ENCODE measurements at regions of chr5 and their contacts with region 1.

Region 1: GRCh38 chr5:43040287-43041098 is at the start of gene ANXA2R:
- DNase-seq: peak in 9 of 10 donors; percentile 64 to 85 (median 77)
- H3K4me3 ChIP-seq: peak within 1 kb of the TSS; percentile 7 to 83 (median 65)
- H3K27ac ChIP-seq: peak within 1 kb of the TSS; percentile 58 to 98 (median 96)
- H3K27me3 ChIP-seq: peaks cover 0 to 83% (median 64%) of the 10 kb centered on the region in 45 donors
- CTCF ChIP-seq: peak; percentile 41 to 87 (median 72)
- total RNA-seq, gene ANXA2R: 0.48 to 5.2 (median 1.9) TPM

Region 2: DNA sequence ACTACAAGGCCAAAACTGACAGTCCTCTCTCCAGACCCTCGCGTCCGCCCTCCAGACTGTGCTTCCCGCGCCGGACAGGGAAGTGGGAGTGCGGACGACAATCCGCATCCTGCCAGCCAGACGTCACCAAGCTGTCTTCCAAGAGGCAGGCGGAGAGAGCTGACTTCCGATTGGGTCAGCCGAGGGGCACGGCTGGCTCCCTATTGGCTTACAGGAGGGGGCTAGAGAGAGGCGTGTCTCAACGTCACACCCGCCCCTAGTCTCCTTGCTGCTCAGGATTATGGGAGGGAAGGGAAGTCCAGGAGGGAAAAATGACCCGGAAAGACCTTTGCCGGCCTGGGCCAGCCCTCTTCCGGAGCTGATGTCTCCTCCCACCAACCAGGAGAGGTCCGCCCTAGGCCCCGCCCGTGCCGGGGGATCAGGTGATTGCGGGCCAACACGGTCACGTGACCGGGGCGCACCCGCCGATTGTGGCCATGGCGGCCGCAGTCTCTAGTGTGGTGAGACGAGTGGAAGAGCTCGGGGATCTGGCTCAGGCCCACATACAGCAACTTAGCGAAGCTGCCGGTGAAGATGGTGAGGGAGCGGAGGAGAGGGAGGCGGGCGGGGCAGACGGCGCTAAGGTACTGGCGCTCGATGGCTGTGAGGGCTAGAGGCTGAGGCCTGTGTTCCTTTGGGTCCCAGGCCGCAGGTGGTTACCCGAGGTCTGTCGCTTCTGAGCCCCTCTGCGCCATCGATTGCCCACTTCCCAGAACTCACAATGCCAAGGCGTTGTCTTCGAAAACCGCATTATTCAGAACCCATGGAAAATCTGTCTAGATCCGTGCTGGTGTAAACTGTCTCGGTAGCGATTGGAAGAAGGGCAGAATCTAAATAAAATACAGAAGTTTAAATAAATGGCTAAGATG is 1136.3 kb before region 1 on chr5 and contains the start of gene RIMOC1:
- intact Hi-C with region 1: loop called in 1 of 2 experiments (anchors 10 kb)
- DNase-seq: peak; percentile 98 to 100 (median 99)
- H3K4me3 ChIP-seq: peak within 1 kb of the TSS; percentile 64 to 99 (median 90)
- H3K27ac ChIP-seq: peak within 1 kb of the TSS; percentile 59 to 95 (median 91)
- H3K27me3 ChIP-seq: peaks cover 0 to 4% (median 0%) of the 10 kb centered on the region in 45 donors
- CTCF ChIP-seq: peak in 23 of 56 donors; percentile 5 to 64 (median 24)
- total RNA-seq, gene RIMOC1: 23.2 to 54.9 (median 37.9) TPM

Region 3: DNA sequence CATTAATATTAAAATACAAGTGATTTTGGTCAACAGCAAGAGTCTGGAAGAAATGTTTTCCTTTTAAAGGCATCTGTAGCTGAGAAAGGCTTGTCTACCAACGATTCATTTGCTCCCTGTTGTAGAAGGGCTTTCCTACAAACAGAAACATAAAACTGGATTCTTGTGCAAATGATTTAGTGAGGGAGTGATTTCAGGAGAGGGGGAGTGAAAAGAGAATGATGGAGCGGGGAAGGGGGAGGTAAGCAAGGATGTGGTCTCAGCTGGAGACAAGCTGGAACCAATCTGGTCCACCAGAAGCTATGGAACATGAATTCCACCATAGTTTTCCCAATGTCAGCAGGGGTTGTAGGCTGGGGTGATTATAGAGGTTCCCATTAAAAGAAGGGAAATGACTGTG is 919.1 kb before region 1 on chr5:
- intact Hi-C with region 1: no loop called
- DNase-seq: no peak
- H3K4me3 ChIP-seq: no peak overlapping the region
- H3K27ac ChIP-seq: no peak overlapping the region
- H3K27me3 ChIP-seq: no peaks in the 10 kb centered on the region
- CTCF ChIP-seq: no peak

Region 4: DNA sequence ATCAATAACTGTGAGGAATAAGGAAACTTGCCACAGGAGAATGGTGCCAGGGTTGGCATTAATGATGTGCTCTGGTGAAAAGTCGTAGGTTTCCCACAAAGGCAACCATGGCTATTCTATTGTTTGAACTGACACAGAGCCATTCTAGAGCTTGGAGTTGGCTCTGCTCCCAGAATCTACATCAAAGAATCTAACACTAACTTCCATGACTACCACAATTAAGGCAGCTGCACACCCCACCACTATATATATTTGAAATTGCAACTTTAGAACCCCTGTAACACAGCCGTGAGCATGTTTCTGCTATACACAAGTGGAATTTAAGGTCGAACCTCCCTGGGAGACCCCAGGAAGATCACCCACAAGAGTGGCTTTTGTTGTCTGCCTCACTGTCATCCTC is 373.6 kb before region 1 on chr5:
- intact Hi-C with region 1: no loop called
- DNase-seq: no peak
- H3K4me3 ChIP-seq: no peak overlapping the region
- H3K27ac ChIP-seq: no peak overlapping the region
- H3K27me3 ChIP-seq: no peaks in the 10 kb centered on the region
- CTCF ChIP-seq: no peak

Region 5: GRCh38 chr5:42994246-42995151 is 46.0 kb before region 1 on chr5:
- intact Hi-C with region 1: loop called (anchors 1 to 2 kb)
- DNase-seq: peak in 9 of 10 donors; percentile 19 to 80 (median 74)
- H3K4me3 ChIP-seq: peak overlapping the region; percentile 0 to 70 (median 52)
- H3K27ac ChIP-seq: peak overlapping the region in 58 of 59 donors; percentile 3 to 94 (median 83)
- H3K27me3 ChIP-seq: peaks cover 15 to 100% (median 91%) of the 10 kb centered on the region in 45 donors
- CTCF ChIP-seq: peak; percentile 44 to 91 (median 75)

Region 6: GRCh38 chr5:43066799-43067741 is 26.6 kb after region 1 on chr5:
- intact Hi-C with region 1: loop called (anchors 1 kb)
- DNase-seq: peak; percentile 73 to 94 (median 86)
- H3K4me3 ChIP-seq: peak overlapping the region; percentile 54 to 96 (median 85)
- H3K27ac ChIP-seq: peak overlapping the region; percentile 96 to 100 (median 100)
- H3K27me3 ChIP-seq: no peaks in the 10 kb centered on the region
- CTCF ChIP-seq: peak in 27 of 56 donors; percentile 4 to 50 (median 22)

Region 7: GRCh38 chr5:43191740-43192557 is 151.5 kb after region 1 on chr5 and contains the start of gene NIM1K:
- intact Hi-C with region 1: loop called in 1 of 2 experiments (anchors 5 kb)
- DNase-seq: peak; percentile 78 to 94 (median 92)
- H3K4me3 ChIP-seq: peak within 1 kb of the TSS; percentile 56 to 95 (median 85)
- H3K27ac ChIP-seq: peak within 1 kb of the TSS; percentile 19 to 96 (median 91)
- H3K27me3 ChIP-seq: no peaks in the 10 kb centered on the region
- CTCF ChIP-seq: peak in 6 of 56 donors; percentile 8 to 29 (median 14)
- total RNA-seq, gene NIM1K: 14.2 to 33.1 (median 26.1) TPM

Measured in dorsolateral prefrontal cortex (tissue), 120 donors.